AG04450 (cell line): ENCODE measurements at regions of chr12 and their contacts with region 1.

Region 1: DNA sequence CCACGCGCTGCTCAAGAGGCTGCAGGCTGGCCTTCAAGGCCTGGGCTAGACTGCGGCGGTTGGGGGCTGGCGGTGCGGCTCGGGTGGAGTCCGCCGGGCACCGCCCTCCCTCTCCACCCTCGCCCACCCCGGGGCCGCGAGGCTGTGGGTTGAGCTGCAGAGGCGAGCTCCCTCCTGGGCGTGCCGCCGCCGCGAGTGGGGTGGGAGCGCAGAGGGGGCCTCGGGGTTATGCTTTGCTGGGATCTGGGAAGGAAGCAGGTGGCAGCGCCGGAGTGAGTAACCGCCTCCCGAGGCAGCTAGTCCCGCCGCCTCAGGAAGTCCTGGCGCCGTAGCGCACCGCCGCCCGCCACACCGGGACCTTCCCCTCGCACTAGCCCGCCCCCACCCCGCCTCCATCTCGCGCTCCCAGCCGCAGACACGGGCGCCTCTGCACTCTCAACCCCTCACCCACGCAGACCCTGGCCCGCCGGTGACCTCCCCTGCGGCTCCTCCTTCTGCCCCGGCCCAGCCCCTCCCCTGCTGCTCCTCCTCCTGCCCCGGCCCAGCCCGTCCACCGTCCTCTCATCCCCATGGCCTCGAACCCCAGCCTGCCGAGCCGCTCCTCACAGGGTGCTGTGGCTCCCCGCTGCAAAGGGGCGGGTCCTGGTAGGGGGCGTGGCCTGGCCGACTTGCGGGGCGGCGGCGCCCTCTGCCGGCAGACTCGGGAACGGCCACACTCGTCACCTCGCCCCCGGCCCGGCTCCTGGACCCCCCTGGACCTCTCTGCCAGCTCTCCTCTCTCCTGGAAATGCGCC is 16.6 kb downstream of the TAMALIN start:
- DNase-seq: no peak
- H3K4me3 ChIP-seq: peak overlapping the region; percentile 67
- H3K27ac ChIP-seq: peak overlapping the region; percentile 11
- H3K27me3 ChIP-seq: no peaks in the 10 kb centered on the region
- CTCF ChIP-seq: peak; percentile 89

Region 2: GRCh38 chr12:51823875-51824565 is 199.4 kb before region 1 on chr12:
- CTCF ChIA-PET with region 1: interaction called, 10 read pairs
- POLR2A ChIA-PET with region 1: no interaction called
- DNase-seq: peak; percentile 24
- H3K4me3 ChIP-seq: no peak overlapping the region
- H3K27ac ChIP-seq: no peak overlapping the region
- H3K27me3 ChIP-seq: no peaks in the 10 kb centered on the region
- CTCF ChIP-seq: peak; percentile 59

Region 3: DNA sequence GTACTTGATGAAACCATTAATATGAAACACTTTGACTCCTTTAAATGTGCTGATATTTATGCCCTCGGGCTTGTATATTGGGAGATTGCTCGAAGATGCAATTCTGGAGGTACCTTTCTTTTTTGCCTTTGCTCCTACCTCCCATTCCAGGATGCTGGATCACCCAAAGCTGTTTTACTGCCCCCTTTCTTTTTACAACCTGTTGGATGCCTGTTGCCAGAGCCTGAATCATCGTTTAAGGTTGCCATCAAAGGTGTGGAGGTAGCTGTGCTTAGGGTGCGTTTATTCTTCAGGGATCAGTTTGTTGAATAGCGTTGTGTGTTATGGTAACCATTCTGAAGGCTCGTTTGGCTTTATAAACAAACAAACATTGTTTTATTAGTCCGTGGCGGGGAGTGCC is 36.5 kb before region 1 on chr12:
- CTCF ChIA-PET with region 1: interaction called, 111 read pairs
- POLR2A ChIA-PET with region 1: interaction called, 5 read pairs
- DNase-seq: no peak
- H3K4me3 ChIP-seq: no peak overlapping the region
- H3K27ac ChIP-seq: no peak overlapping the region
- H3K27me3 ChIP-seq: no peaks in the 10 kb centered on the region
- CTCF ChIP-seq: no peak

Region 4: GRCh38 chr12:52044261-52044983 is 21.0 kb after region 1 on chr12:
- CTCF ChIA-PET with region 1: interaction called, 26 read pairs
- POLR2A ChIA-PET with region 1: no interaction called
- DNase-seq: no peak
- H3K4me3 ChIP-seq: no peak overlapping the region
- H3K27ac ChIP-seq: peak overlapping the region; percentile 21
- H3K27me3 ChIP-seq: no peaks in the 10 kb centered on the region
- CTCF ChIP-seq: no peak

Region 5: DNA sequence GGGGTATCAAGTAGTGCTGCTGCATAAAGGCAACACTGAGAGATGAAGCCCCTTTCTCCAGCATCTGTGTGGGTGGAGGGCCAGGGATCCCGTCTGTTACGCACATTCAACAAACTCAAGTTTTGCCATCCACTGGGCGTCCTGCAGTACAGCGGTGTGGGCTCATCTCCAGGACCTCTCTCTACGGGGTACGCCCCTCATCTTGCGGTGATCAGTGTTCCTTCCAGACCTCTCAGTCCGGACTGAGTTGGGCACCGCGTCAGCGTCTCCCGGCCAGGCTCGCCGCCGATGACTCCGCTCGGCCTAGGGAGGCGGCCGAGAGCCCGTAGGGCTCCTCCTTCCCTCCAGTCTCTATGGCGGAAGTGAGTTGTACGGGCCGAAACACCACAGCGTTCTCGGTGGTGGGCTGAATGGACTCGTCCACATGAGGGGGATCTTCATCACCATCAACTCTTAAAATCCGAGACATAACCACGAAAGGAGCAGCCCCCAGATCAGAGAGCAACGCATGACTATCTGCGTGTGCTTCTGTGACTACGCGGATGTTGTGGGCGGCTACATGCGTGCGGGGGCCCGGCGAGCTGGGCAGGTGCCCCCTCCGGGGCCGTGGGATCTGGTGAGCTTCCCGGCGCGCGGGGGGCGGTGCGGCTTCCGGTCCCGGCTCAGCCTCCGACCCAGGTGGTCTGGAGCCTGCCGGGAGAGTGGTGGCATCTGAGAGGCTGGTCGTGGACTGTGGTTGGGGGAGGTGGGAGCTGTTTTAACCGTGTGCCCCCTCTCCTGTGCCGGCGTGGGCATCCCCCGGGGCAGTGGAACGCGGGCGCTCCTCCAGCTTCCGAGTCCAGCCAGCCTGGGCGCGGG is 46.2 kb after region 1 on chr12 and contains the start of gene ATG101:
- CTCF ChIA-PET with region 1: interaction called, 624 read pairs
- POLR2A ChIA-PET with region 1: interaction called, 14 read pairs
- DNase-seq: peak; percentile 94
- H3K4me3 ChIP-seq: peak within 1 kb of the TSS; percentile 100
- H3K27ac ChIP-seq: peak within 1 kb of the TSS; percentile 93
- H3K27me3 ChIP-seq: no peaks in the 10 kb centered on the region
- CTCF ChIP-seq: peak; percentile 68
- polyA plus RNA-seq, gene ATG101: 97.3 and 112 TPM in 2 replicates

Region 6: DNA sequence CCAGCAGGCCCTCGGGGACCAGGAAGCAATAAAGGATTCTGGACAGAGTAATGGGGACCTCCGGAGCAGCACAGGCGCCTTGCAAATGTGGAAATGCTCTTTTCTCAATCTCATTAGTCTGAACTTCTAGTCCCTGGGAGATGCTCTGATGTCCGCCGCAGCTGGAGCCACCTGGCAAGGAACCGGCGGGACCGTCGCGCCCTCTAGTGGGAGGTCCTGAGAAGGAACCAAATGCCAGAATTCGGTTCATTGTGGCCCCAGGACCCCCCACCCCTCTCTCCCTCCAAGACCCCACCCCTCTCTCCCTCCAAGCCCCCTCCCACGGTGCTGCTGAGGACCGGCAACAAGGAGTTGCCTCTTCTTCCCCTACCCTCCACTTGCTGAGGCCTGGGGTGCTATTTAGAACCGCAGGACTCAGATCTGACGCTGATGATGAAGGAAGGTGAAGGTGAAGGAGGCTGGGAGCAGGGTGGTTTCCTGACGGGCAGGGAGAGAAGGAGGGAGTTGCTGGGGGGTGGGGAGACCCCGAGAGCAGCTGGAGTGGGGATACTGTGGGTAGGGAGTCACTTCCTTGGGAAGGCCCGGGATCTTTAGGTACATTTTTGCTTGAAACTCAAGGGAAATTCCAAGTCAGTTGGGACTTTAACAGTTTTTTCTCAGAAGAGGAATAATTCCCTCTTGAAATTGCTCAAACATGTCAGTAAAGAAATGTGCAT is 98.6 kb after region 1 on chr12:
- CTCF ChIA-PET with region 1: interaction called, 228 read pairs
- POLR2A ChIA-PET with region 1: interaction called, 4 read pairs
- DNase-seq: peak; percentile 15
- H3K4me3 ChIP-seq: no peak overlapping the region
- H3K27ac ChIP-seq: peak overlapping the region; percentile 47
- H3K27me3 ChIP-seq: peaks cover 13% of the 10 kb centered on the region
- CTCF ChIP-seq: peak; percentile 75

Region 7: GRCh38 chr12:52749827-52750226 is 726.4 kb after region 1 on chr12:
- CTCF ChIA-PET with region 1: no interaction called
- POLR2A ChIA-PET with region 1: no interaction called
- DNase-seq: no peak
- H3K4me3 ChIP-seq: no peak overlapping the region
- H3K27ac ChIP-seq: no peak overlapping the region
- H3K27me3 ChIP-seq: peaks cover 5% of the 10 kb centered on the region
- CTCF ChIP-seq: no peak